Mammary epithelial cell (primary cell): ENCODE measurements at regions of chr20 and their contacts with region 1.

Region 1: GRCh38 chr20:7171911-7172310 is 404.4 kb downstream of the BMP2 start:
- DNase-seq: peak; percentile 67
- H3K4me3 ChIP-seq: no peak overlapping the region
- H3K27ac ChIP-seq: no peak overlapping the region
- H3K4me1 ChIP-seq: peaks cover 8% of the 10 kb centered on the region
- H3K27me3 ChIP-seq: no peaks in the 10 kb centered on the region
- CTCF ChIP-seq: no peak

Region 2: GRCh38 chr20:7333841-7334240 is 161.9 kb after region 1 on chr20:
- CTCF ChIA-PET with region 1: no interaction called
- dilution Hi-C with region 1: no loop called
- in situ Hi-C with region 1: no loop called
- intact Hi-C with region 1: no loop called
- DNase-seq: peak; percentile 73
- H3K4me3 ChIP-seq: no peak overlapping the region
- H3K27ac ChIP-seq: no peak overlapping the region
- H3K4me1 ChIP-seq: no peaks in the 10 kb centered on the region
- H3K27me3 ChIP-seq: no peaks in the 10 kb centered on the region
- CTCF ChIP-seq: no peak

Region 3: GRCh38 chr20:7366189-7366588 is 194.3 kb after region 1 on chr20:
- CTCF ChIA-PET with region 1: no interaction called
- dilution Hi-C with region 1: no loop called
- in situ Hi-C with region 1: no loop called
- intact Hi-C with region 1: loop called (anchors 5 kb)
- DNase-seq: no peak
- H3K4me3 ChIP-seq: no peak overlapping the region
- H3K27ac ChIP-seq: no peak overlapping the region
- H3K4me1 ChIP-seq: no peaks in the 10 kb centered on the region
- H3K27me3 ChIP-seq: no peaks in the 10 kb centered on the region
- CTCF ChIP-seq: no peak

Region 4: GRCh38 chr20:7437311-7437710 is 265.4 kb after region 1 on chr20:
- CTCF ChIA-PET with region 1: no interaction called
- dilution Hi-C with region 1: no loop called
- in situ Hi-C with region 1: no loop called
- intact Hi-C with region 1: no loop called
- DNase-seq: no peak
- H3K4me3 ChIP-seq: no peak overlapping the region
- H3K27ac ChIP-seq: no peak overlapping the region
- H3K4me1 ChIP-seq: no peaks in the 10 kb centered on the region
- H3K27me3 ChIP-seq: no peaks in the 10 kb centered on the region
- CTCF ChIP-seq: no peak